Activated CD8-positive, alpha-beta T cell treated with anti-CD3 and anti-CD28 coated beads, Interleukin-2, amount 10 ng/mL, durations not matched to agents 7 days and 5 days (primary cell): ENCODE measurements at regions of chr1 and their contacts with region 1.

Region 1: DNA sequence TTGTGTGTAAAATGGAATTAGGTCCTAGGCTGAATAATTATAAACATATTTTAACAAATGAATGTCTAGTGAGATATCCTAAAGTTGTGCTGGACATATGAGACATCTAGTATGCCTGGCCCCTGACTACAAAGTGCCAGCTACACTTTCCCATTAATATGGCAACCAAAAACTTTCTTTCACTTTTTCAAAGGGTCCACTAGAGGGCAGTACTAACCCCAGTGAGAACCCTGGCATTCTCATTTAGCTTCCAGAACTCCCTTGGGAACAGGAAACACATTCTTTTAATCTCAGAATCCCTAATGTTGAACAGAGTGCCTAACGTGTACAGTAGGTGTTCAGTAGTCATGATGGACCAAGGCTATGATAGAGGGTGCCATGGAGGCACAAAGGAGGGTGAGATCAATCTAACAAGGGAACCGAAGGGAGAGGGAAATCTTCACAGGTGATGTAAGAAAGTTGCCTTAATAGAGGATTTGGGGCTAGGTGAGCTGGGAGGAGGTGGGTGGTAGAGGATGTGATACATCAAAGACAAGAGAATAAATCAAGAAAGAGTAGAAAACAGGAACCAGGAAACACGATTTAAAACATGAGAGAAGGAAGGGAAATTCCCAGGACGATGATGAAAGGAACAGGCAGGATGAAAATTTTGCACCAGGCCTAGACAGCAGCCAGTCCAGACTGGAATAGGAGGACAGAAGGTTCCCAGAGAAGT is 41.6 kb downstream of the NSL1 start:
- DNase-seq: no peak
- ATAC-seq: peak; percentile 45
- H3K4me3 Mint-ChIP-seq: no peak overlapping the region
- H3K27ac Mint-ChIP-seq: no peak overlapping the region
- H3K4me1 Mint-ChIP-seq: peaks cover 41% of the 10 kb centered on the region
- H3K27me3 Mint-ChIP-seq: no peaks in the 10 kb centered on the region

Region 2: GRCh38 chr1:212401838-212402582 is 348.0 kb before region 1 on chr1:
- CTCF ChIA-PET with region 1: no interaction called
- POLR2A ChIA-PET with region 1: no interaction called
- DNase-seq: no peak
- ATAC-seq: no peak
- H3K4me3 Mint-ChIP-seq: no peak overlapping the region
- H3K27ac Mint-ChIP-seq: no peak overlapping the region
- H3K4me1 Mint-ChIP-seq: no peaks in the 10 kb centered on the region
- H3K27me3 Mint-ChIP-seq: no peaks in the 10 kb centered on the region

Region 3: GRCh38 chr1:212721388-212722247 is 28.4 kb before region 1 on chr1:
- CTCF ChIA-PET with region 1: interaction called, 14 read pairs
- POLR2A ChIA-PET with region 1: no interaction called
- DNase-seq: peak; percentile 60
- ATAC-seq: peak; percentile 89
- H3K4me3 Mint-ChIP-seq: peak overlapping the region; percentile 52
- H3K27ac Mint-ChIP-seq: peak overlapping the region; percentile 76
- H3K4me1 Mint-ChIP-seq: peaks cover 36% of the 10 kb centered on the region
- H3K27me3 Mint-ChIP-seq: peaks cover 10% of the 10 kb centered on the region

Region 4: GRCh38 chr1:212738330-212738729 is 11.6 kb before region 1 on chr1:
- CTCF ChIA-PET with region 1: interaction called, 33 read pairs
- POLR2A ChIA-PET with region 1: no interaction called
- DNase-seq: no peak
- ATAC-seq: peak; percentile 53
- H3K4me3 Mint-ChIP-seq: no peak overlapping the region
- H3K27ac Mint-ChIP-seq: peak overlapping the region; percentile 69
- H3K4me1 Mint-ChIP-seq: peaks cover 33% of the 10 kb centered on the region
- H3K27me3 Mint-ChIP-seq: no peaks in the 10 kb centered on the region

Region 5: GRCh38 chr1:212760126-212760823 is 10.3 kb after region 1 on chr1:
- CTCF ChIA-PET with region 1: interaction called, 13 read pairs
- POLR2A ChIA-PET with region 1: interaction called, 4 read pairs
- DNase-seq: peak; percentile 69
- ATAC-seq: peak; percentile 77
- H3K4me3 Mint-ChIP-seq: no peak overlapping the region
- H3K27ac Mint-ChIP-seq: no peak overlapping the region
- H3K4me1 Mint-ChIP-seq: peaks cover 8% of the 10 kb centered on the region
- H3K27me3 Mint-ChIP-seq: no peaks in the 10 kb centered on the region

Region 6: DNA sequence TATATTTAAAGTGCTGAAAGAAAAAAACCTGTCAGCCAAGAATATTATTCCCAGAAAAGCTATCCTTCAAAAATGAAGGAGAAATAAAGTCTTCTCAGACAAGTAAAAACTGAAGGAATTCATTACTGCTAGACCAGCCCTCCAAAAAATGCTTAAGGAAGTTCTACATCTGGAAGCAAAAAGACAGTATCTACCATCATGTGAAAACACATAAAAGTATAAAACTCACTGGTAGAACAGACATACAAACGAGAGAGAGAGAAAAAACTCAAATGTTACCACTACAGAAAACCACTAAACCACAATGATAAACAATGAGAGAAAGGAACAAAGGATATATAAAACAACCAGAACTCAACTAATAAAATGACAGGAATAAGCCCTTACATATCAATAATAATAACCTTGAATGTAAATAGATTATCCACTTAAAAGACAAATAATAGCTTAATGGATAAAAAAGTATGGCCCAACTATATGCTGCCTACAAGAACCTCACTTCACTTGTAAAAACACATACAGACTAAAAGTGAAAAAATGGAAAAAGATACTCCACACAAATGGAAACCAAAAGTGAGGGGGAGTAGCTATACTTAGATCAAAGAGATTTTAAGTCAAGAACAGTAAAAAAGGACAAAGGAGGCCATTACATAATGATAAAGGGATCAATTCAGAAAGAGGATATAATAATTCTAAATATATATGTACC is 19.6 kb after region 1 on chr1:
- CTCF ChIA-PET with region 1: interaction called, 19 read pairs
- POLR2A ChIA-PET with region 1: no interaction called
- DNase-seq: no peak
- ATAC-seq: peak; percentile 63
- H3K4me3 Mint-ChIP-seq: no peak overlapping the region
- H3K27ac Mint-ChIP-seq: peak overlapping the region; percentile 26
- H3K4me1 Mint-ChIP-seq: peaks cover 27% of the 10 kb centered on the region
- H3K27me3 Mint-ChIP-seq: no peaks in the 10 kb centered on the region

Region 7: DNA sequence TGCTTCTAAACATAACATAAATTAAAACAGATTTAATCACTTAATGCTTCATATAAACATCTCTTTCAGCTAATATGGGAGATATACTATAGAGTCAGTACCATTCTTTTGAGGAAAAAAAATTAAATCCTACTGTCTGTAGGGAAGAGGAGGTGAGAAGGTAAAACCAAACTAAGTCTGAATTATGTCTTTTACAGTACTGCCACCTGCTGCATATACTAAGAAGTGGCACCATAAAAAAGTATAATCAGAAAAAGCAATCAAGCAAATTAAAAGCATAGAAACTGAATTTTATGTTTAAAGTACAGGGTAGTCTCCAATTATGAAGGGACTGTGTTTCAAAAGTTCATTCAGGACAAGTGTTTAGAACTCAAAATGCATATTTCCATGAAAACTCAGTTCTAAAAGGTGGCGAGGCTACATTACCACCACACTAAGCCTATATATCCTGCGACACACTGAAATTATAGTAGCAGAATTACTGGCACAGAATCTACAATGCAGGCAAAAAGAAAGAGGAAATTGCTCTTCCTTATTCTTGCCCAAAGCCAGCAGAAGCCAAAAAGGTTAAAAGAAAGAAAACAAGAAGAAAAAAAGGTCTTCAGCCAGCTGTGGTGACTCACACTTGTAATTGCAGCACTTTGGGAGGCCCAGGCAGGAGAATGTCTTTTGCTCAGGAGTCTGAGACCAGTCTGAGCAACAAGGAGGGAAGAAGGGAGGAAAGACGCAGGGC is 32.6 kb after region 1 on chr1:
- CTCF ChIA-PET with region 1: interaction called, 19 read pairs
- POLR2A ChIA-PET with region 1: no interaction called
- DNase-seq: no peak
- ATAC-seq: peak; percentile 57
- H3K4me3 Mint-ChIP-seq: no peak overlapping the region
- H3K27ac Mint-ChIP-seq: no peak overlapping the region
- H3K4me1 Mint-ChIP-seq: no peaks in the 10 kb centered on the region
- H3K27me3 Mint-ChIP-seq: no peaks in the 10 kb centered on the region